Common myeloid progenitor, CD34-positive (primary cell): ENCODE measurements at regions of chr1 and their contacts with region 1.

Region 1: DNA sequence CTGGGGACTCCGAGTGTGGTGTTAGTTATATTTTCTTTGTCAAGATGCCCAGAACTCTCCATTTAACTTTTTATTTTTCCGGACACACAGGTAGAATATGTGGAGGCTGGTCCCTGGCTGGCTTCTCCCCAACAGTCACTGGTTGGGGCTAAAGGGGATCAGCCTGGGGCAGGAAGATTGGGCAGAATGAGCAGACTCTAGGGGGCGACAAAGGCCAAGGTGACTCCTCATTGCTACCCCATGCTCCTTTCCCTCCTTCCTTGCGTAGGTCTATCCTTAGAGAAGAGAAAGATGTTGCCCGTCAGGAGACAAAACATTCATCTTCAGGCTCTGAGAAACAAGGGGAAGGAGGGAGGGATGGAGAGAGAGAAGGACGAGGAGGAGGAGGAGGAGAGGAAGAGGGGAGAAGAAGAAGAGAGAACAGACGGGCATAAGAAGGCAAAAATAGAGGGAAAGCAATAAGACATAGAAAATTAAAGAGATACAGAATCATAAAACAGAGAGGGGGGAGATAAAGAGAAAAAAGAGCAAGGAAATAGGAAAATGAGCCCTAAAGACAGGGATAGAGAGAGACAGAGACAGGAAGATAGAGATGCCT is 89.9 kb downstream of the FOXD2 start:
- DNase-seq: peak; percentile 54 to 71 (median 56)
- H3K4me3 ChIP-seq: no peak overlapping the region
- H3K27ac ChIP-seq: no peak overlapping the region
- H3K4me1 ChIP-seq: peaks cover 0 to 26% (median 10%) of the 10 kb centered on the region in 4 experiments
- H3K27me3 ChIP-seq: peaks cover 0 to 15% (median 0%) of the 10 kb centered on the region in 5 experiments

Region 2: DNA sequence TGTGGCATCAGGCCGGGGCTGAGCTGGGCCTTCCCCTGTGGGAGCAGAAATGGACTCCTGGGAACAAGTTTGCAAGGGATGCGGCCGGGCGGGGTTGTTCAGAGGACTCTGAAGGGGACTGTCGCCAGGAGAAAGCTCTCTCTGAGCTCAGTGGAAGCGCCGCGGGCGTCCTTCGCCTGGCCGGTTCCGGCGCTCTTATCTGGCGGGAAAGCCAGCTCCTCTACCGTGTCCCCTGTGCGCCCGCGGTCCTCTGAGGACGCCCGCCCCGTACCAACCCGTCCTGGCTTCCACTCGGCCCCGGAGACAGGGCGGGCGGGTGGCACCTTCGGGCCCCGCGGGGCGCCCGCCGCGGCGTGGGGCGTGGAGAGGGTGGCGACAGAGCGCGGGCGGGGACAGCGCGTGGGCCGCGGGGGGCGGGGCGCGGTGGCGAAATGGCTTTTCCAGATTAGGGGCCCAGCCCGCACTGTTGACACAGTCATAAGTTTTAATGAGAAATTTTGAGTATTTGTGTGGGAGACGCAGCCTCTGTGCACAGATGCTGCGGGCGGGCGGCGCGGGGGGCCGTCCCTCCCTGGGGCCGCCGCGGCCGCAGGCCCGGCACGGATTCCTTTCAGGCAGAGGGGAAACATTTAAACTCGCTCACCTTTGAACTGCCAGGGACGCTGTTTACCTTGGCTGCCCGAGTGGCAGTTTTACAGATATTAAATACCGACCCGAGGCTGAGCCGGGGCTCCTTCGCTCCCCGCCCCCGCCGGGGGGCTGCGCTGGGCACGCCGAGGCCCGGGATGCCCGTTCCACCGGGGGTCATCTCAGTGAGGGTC is 19.7 kb before region 1 on chr1:
- CTCF ChIA-PET with region 1: interaction called, 16 read pairs
- POLR2A ChIA-PET with region 1: no interaction called
- DNase-seq: peak in 2 of 3 donors; percentile 42 to 51
- H3K4me3 ChIP-seq: peak overlapping the region; percentile 27 to 76 (median 50)
- H3K27ac ChIP-seq: no peak overlapping the region
- H3K4me1 ChIP-seq: peaks cover 0 to 18% (median 13%) of the 10 kb centered on the region in 4 experiments
- H3K27me3 ChIP-seq: peaks cover 15 to 56% (median 37%) of the 10 kb centered on the region in 5 experiments

Region 3: DNA sequence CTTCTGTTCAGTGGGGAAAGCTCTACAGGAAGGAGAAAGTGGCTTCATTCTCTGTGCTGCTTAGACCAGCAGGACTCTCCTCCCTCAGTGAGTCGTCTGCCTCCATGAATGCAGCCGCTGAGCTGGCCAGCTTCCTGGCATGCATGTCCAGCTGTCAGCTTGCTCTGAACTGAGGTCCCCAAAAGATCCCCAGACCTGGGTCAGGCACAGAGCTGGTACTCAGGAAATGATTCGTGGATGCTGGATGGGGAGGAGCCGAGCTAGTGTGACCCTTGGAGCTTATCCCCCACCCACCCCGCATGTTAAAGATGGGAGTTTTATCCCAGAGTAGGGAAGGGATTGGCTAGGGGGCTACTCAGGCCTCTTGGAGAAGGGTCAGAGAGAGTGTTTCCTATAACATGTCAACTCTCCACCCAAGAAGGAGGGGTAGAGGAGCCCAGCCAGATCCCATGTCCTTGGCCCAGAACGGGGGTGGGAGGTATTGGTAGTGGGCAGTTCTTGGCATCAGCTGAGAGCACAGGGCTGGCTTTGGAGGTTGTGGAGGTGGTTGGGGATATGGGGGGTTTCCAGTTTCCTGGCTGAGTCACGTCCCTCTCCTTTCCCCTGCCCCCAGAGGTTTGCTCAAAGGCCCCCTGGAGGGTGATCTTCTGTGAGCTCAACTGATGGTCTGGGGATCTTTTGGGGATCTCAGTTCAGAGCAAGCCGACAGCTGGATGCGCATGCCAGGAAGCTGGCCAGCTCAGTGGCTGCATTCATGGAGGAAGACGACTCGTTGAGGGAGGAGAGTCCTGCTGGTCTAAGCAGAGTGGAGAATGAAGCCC is 20.2 kb after region 1 on chr1:
- CTCF ChIA-PET with region 1: interaction called, 18 read pairs
- POLR2A ChIA-PET with region 1: no interaction called
- DNase-seq: peak in 2 of 3 donors; percentile 58 to 66
- H3K4me3 ChIP-seq: no peak overlapping the region
- H3K27ac ChIP-seq: no peak overlapping the region
- H3K4me1 ChIP-seq: peaks cover 0 to 5% (median 0%) of the 10 kb centered on the region in 4 experiments
- H3K27me3 ChIP-seq: peaks cover 0 to 2% (median 0%) of the 10 kb centered on the region in 5 experiments

Region 4: GRCh38 chr1:47624531-47624930 is 96.8 kb after region 1 on chr1:
- CTCF ChIA-PET with region 1: interaction called, 13 read pairs
- POLR2A ChIA-PET with region 1: no interaction called
- DNase-seq: peak; percentile 35 to 67 (median 53)
- H3K4me3 ChIP-seq: no peak overlapping the region
- H3K27ac ChIP-seq: no peak overlapping the region
- H3K4me1 ChIP-seq: no peaks in the 10 kb centered on the region
- H3K27me3 ChIP-seq: peaks cover 0 to 5% (median 0%) of the 10 kb centered on the region in 5 experiments

Region 5: GRCh38 chr1:47710329-47711071 is 182.7 kb after region 1 on chr1:
- CTCF ChIA-PET with region 1: interaction called, 36 read pairs
- POLR2A ChIA-PET with region 1: no interaction called
- DNase-seq: peak; percentile 33 to 61 (median 54)
- H3K4me3 ChIP-seq: peak overlapping the region in 2 of 7 experiments; percentile 59 to 64
- H3K27ac ChIP-seq: no peak overlapping the region
- H3K4me1 ChIP-seq: peaks cover 0 to 27% (median 19%) of the 10 kb centered on the region in 4 experiments
- H3K27me3 ChIP-seq: peaks cover 2 to 97% (median 41%) of the 10 kb centered on the region in 5 experiments

Region 6: GRCh38 chr1:47725992-47726855 is 198.5 kb after region 1 on chr1:
- CTCF ChIA-PET with region 1: interaction called, 11 read pairs
- POLR2A ChIA-PET with region 1: no interaction called
- DNase-seq: peak; percentile 78 to 86 (median 85)
- H3K4me3 ChIP-seq: peak overlapping the region in 3 of 7 experiments; percentile 22 to 32 (median 28)
- H3K27ac ChIP-seq: no peak overlapping the region
- H3K4me1 ChIP-seq: peaks cover 0 to 26% (median 10%) of the 10 kb centered on the region in 4 experiments
- H3K27me3 ChIP-seq: peaks cover 0 to 35% (median 22%) of the 10 kb centered on the region in 5 experiments